ENCODE measurements at regions of chr9 and their contacts with region 1.

Region 1: DNA sequence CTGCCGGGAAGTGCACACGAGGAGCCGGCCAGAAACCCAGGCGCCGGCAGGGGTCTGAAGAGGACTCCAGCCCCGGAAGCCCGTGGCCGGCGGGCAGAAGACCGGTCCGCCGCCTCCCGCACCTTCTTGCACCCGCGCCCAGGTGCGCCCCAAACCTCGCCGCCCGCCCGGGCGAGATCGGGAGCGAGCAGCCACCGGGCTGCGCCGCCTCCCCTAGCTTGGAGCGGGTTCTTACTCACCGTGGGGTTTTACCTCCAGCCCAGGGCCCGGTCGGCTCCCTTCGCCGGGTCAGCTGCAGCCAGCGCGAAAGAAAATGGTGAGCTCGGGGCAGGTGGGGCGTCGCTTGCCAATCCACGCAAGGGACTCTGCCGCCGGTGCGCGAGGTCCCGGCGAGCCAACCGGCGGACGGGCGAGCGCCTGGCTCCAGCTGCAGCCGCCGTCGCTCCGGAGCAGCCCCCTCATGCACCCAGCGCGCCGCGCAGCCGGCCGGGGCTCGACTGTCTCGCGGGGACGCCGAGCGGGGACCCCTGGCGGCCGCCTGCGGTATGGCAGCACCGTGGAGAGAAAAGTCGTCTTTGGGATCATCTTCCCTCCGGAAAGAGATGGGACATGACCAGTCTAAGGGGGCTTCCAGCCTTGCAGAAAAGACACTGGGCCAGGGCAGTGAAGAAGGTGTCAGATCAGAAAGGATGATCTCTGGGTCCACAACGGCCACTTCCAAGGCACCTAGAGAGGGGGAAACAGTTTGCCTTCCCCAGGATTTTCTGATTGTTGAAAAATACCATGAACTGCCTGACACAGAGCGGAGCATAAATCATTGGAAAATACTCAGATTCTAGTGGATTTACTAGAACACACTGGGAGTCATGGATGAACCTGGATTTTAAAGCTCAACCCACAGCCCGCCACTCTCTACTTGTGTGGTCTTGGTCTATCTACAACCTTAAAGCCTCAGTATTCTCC is at the start of gene MOB3B:
- DNase-seq: peak; percentile 65 to 81 (median 68)
- H3K4me3 ChIP-seq: peak within 1 kb of the TSS; percentile 74
- H3K4me3 Mint-ChIP-seq: peak within 1 kb of the TSS; percentile 86 to 95 (median 90)
- H3K27ac ChIP-seq: peak within 1 kb of the TSS; percentile 26
- H3K27ac Mint-ChIP-seq: peak within 1 kb of the TSS in 7 of 8 donors; percentile 57 to 86 (median 77)
- H3K4me1 ChIP-seq: peaks cover 7% of the 10 kb centered on the region
- H3K4me1 Mint-ChIP-seq: peaks cover 7 to 15% (median 10%) of the 10 kb centered on the region in 3 donors
- H3K27me3 ChIP-seq: no peaks in the 10 kb centered on the region
- H3K27me3 Mint-ChIP-seq: no peaks in the 10 kb centered on the region
- total RNA-seq, gene MOB3B: 0.20 to 0.29 TPM

Region 2: GRCh38 chr9:27333241-27334052 is 196.2 kb before region 1 on chr9:
- CTCF ChIA-PET with region 1: interaction called, 27 read pairs
- POLR2A ChIA-PET with region 1: interaction called, 6 read pairs
- DNase-seq: peak in 4 of 5 donors; percentile 3 to 55 (median 22)
- H3K4me3 ChIP-seq: no peak overlapping the region
- H3K4me3 Mint-ChIP-seq: no peak overlapping the region
- H3K27ac ChIP-seq: no peak overlapping the region
- H3K27ac Mint-ChIP-seq: no peak overlapping the region
- H3K4me1 ChIP-seq: peaks cover 4% of the 10 kb centered on the region
- H3K4me1 Mint-ChIP-seq: no peaks in the 10 kb centered on the region
- H3K27me3 ChIP-seq: no peaks in the 10 kb centered on the region
- H3K27me3 Mint-ChIP-seq: peaks cover 0 to 7% of the 10 kb centered on the region in 2 donors

Region 3: GRCh38 chr9:27539479-27540441 is 10.2 kb after region 1 on chr9:
- CTCF ChIA-PET with region 1: interaction called, 12 read pairs
- POLR2A ChIA-PET with region 1: no interaction called
- DNase-seq: no peak
- H3K4me3 ChIP-seq: no peak overlapping the region
- H3K4me3 Mint-ChIP-seq: no peak overlapping the region
- H3K27ac ChIP-seq: no peak overlapping the region
- H3K27ac Mint-ChIP-seq: no peak overlapping the region
- H3K4me1 ChIP-seq: no peaks in the 10 kb centered on the region
- H3K4me1 Mint-ChIP-seq: no peaks in the 10 kb centered on the region
- H3K27me3 ChIP-seq: no peaks in the 10 kb centered on the region
- H3K27me3 Mint-ChIP-seq: no peaks in the 10 kb centered on the region